Activated CD4-positive, alpha-beta memory T cell treated with anti-CD3 and anti-CD28 coated beads for 36 hours (primary cell): ENCODE measurements at regions of chr9 and their contacts with region 1.

Region 1: DNA sequence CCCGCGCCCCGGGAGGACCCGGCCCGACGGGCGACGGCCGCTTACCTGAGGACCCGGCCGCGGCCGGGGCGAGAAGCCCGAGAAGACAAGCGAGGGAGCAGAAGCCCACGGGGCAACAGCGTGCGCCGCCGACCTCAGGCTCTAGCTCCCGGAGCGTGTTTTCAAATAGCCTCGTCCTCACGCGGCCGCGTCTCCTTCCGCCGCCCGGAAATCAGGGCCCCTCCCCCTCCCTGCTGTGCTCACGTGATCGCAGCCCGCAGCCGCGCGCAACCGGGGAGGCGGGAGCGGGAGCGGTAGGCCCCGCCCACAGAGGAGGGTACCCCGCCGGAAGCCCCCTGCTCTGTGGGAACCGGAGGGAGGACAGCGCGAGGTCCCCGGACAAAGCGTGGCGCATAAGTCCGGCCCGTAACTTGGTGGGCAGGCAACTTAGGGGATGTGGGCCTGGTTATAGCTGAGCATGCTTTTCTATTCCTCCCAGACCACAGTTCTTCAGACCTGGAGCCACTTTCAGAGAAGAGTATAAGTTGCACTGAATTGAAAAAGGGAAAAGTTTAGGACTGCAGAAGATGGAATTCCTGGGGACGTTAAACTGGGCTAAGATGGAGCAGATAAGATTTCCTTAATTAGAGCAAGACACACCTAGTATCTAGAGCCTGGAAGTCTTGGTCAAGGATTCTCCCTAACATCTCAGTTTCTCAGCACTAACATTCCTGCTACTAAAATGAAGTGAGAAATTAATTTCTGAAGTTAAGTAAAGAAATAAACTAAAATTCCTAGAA is at the start of gene TEX10:
- DNase-seq: peak; percentile 92
- H3K4me3 Mint-ChIP-seq: peak within 1 kb of the TSS; percentile 87
- H3K27ac Mint-ChIP-seq: peak within 1 kb of the TSS; percentile 69
- H3K4me1 Mint-ChIP-seq: peaks cover 44% of the 10 kb centered on the region
- H3K27me3 Mint-ChIP-seq: no peaks in the 10 kb centered on the region
- total RNA-seq, gene TEX10: 20.3 to 20.7 TPM

Region 2: GRCh38 chr9:100411472-100412283 is 58.8 kb after region 1 on chr9:
- CTCF ChIA-PET with region 1: interaction called, 3 read pairs
- POLR2A ChIA-PET with region 1: no interaction called
- intact Hi-C with region 1: loop called (anchors 1 kb)
- DNase-seq: peak; percentile 93
- H3K4me3 Mint-ChIP-seq: peak overlapping the region; percentile 79
- H3K27ac Mint-ChIP-seq: peak overlapping the region; percentile 66
- H3K4me1 Mint-ChIP-seq: peaks cover 11% of the 10 kb centered on the region
- H3K27me3 Mint-ChIP-seq: peaks cover 13% of the 10 kb centered on the region

Region 3: DNA sequence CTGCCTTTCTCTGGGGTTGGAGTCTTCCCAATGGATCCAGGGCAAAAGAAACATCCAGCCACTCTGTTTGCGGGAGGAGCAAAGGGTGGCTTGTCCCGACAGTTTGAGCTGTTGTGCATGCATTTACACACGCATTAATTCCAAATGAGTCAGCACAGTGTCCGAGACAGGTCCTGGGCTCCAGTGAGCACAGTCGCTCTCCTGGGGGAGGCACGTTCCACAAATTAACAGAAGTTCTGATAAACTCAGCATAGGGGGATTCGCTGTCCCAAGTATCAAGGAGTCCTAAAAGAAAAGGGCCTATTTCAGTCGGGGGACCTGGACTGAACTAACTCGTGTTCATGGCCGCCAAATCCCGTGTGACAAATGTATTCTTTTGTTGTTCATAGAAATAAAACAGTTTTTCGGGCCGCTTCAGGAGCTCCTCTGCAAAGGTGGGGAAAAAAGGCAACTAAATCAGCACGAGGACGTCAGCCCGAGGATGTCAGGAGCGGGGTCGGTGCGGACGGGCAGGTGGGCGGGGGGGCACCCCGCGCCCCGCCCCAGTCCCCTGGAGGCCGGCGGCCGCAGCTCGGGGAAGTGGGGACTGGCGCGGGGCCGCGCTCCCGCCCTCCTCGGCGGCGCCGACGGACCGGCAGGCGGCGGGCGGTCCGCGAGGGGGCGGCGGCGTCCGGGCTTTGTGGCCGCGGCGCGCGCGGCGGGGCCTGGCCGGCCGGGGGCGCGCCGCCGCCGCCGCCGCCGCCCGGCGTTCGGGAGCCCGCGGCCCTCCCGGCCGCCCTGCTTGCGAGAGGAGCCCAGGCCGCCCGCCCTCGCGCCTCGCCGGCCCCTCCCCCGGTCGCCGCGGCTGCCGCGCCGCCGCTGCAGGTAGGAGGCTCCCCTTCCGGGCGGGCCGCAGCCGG is 73.9 kb after region 1 on chr9 and contains the start of gene MSANTD3:
- CTCF ChIA-PET with region 1: interaction called, 3 read pairs
- POLR2A ChIA-PET with region 1: interaction called, 3 read pairs
- intact Hi-C with region 1: loop called (anchors 2 kb)
- DNase-seq: peak; percentile 67
- H3K4me3 Mint-ChIP-seq: peak within 1 kb of the TSS; percentile 79
- H3K27ac Mint-ChIP-seq: peak within 1 kb of the TSS; percentile 82
- H3K4me1 Mint-ChIP-seq: peaks cover 40% of the 10 kb centered on the region
- H3K27me3 Mint-ChIP-seq: peaks cover 1% of the 10 kb centered on the region
- total RNA-seq, gene MSANTD3: 16.3 to 18.3 TPM